ENCODE measurements at regions of chr1 and their contacts with region 1.

Region 1: GRCh38 chr1:165914136-165914798 is 86.9 kb downstream of the UCK2 start:
- DNase-seq: peak; percentile 82
- H3K4me3 ChIP-seq: no peak overlapping the region
- H3K27ac ChIP-seq: no peak overlapping the region
- H3K4me1 ChIP-seq: peaks cover 13% of the 10 kb centered on the region
- H3K27me3 ChIP-seq: no peaks in the 10 kb centered on the region
- CTCF ChIP-seq: peak; percentile 77

Region 2: GRCh38 chr1:165392634-165393571 is 521.4 kb before region 1 on chr1:
- intact Hi-C with region 1: loop called (anchors 5 kb)
- DNase-seq: peak; percentile 76
- H3K4me3 ChIP-seq: no peak overlapping the region
- H3K27ac ChIP-seq: no peak overlapping the region
- H3K4me1 ChIP-seq: no peaks in the 10 kb centered on the region
- H3K27me3 ChIP-seq: no peaks in the 10 kb centered on the region
- CTCF ChIP-seq: peak; percentile 95

Region 3: GRCh38 chr1:165603810-165604209 is 310.5 kb before region 1 on chr1:
- intact Hi-C with region 1: loop called (anchors 2 kb)
- DNase-seq: no peak
- H3K4me3 ChIP-seq: no peak overlapping the region
- H3K27ac ChIP-seq: no peak overlapping the region
- H3K4me1 ChIP-seq: peaks cover 5% of the 10 kb centered on the region
- H3K27me3 ChIP-seq: no peaks in the 10 kb centered on the region
- CTCF ChIP-seq: no peak

Region 4: DNA sequence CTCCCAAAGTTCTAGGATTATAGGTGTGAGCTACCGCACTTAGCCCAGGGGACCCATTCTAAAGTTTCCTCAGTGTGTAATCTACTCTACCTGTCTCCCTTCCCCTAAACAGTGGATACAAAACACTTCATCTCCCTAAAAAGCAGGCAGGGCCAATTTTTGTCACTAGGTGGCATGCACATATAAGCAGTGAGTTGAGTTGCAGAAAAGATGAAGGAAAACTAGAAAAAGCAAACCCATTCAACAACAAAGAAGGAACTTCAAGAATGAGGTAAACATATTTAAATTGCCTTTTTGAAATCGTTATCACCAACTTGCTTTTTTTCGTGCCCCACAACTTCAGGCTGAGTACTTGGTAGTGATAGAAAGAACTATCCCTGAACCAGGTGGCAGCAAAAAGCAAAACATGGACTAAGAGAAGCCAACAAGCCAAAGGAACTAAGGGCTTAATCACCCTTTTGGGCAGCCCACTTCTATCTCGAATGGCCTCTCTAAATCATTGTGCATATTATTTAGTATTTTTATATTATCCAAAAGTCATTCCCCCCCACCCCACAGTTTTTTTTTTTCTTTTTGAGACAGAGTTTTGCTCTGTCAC is 196.2 kb before region 1 on chr1:
- intact Hi-C with region 1: loop called (anchors 2 kb)
- DNase-seq: peak; percentile 52
- H3K4me3 ChIP-seq: no peak overlapping the region
- H3K27ac ChIP-seq: no peak overlapping the region
- H3K4me1 ChIP-seq: no peaks in the 10 kb centered on the region
- H3K27me3 ChIP-seq: no peaks in the 10 kb centered on the region
- CTCF ChIP-seq: peak; percentile 61

Region 5: GRCh38 chr1:165768513-165769394 is 145.5 kb before region 1 on chr1 and contains the start of gene TMCO1:
- intact Hi-C with region 1: loop called (anchors 5 kb)
- DNase-seq: peak; percentile 98
- H3K4me3 ChIP-seq: peak within 1 kb of the TSS; percentile 69
- H3K27ac ChIP-seq: peak within 1 kb of the TSS; percentile 88
- H3K4me1 ChIP-seq: peaks cover 3% of the 10 kb centered on the region
- H3K27me3 ChIP-seq: no peaks in the 10 kb centered on the region
- CTCF ChIP-seq: no peak
- total RNA-seq, gene TMCO1: 149 to 173 TPM

Region 6: DNA sequence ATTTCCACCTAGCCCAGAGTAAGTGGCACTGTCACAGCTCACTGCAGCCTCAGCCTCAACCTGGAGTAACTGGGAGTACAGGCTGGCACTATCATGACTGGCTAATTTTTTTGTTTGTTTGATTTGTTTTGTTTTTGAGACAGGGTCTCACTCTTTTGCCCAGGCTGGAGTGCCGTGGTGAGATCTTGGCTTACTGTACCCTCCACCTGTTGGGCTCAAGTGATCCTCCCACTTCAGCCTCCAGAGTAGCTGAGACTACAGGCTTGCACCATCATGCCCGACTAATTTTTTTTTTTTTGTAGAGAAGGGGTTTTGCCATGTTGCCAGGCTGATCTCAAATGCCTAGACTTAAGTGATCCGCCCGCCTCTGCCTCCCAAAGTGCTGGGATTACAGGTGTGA is 84.4 kb before region 1 on chr1:
- intact Hi-C with region 1: loop called (anchors 5 kb)
- DNase-seq: no peak
- H3K4me3 ChIP-seq: no peak overlapping the region
- H3K27ac ChIP-seq: no peak overlapping the region
- H3K4me1 ChIP-seq: peaks cover 6% of the 10 kb centered on the region
- H3K27me3 ChIP-seq: no peaks in the 10 kb centered on the region
- CTCF ChIP-seq: no peak

Region 7: GRCh38 chr1:165857046-165857801 is 57.0 kb before region 1 on chr1:
- intact Hi-C with region 1: no loop called
- DNase-seq: peak; percentile 28
- H3K4me3 ChIP-seq: no peak overlapping the region
- H3K27ac ChIP-seq: no peak overlapping the region
- H3K4me1 ChIP-seq: peaks cover 26% of the 10 kb centered on the region
- H3K27me3 ChIP-seq: no peaks in the 10 kb centered on the region
- CTCF ChIP-seq: no peak